Common myeloid progenitor, CD34-positive (primary cell): ENCODE measurements at regions of chr3 and their contacts with region 1.

Region 1: DNA sequence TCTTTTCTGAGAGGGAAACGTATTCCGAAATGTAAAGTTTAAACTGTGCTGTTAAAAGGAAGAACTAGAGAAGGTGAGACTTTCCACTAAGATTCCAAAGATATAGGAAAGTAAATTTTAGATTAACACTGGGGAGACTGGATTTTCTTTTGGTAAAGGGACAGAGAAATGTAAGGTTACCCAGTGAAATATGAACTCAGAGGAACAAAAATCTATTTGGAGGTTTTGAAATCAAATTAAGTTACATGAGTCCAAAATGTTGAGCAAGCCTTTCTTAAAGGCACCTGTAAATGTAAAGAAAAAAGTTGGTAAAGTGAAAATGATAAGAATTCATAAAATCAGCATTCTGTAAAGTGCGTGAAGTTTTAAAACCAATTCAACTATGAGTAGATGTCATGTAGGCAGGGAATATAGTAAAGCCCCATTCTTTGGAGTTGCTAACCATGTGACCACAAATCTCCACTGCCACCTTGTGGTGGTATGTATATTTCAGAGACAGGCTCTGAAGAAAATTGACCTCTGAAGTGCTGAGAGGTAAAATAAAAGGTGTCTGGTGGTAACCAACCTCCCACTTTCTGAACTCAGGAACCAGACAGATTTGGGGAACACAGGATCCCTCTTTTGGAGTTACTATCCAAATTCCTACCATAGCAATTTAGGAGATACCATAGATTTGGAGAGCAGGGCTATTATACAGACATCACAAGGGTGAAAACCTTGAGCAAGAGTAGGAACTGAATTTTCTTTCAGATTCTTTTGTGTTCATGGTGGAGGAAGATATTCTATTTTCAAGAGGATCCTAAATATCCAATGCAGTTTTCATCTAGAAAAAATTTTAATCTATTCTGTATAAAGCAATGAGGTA is 215.3 kb downstream of the ROBO2 start:
- DNase-seq: peak; percentile 34 to 62 (median 54)
- H3K4me3 ChIP-seq: no peak overlapping the region
- H3K27ac ChIP-seq: no peak overlapping the region
- H3K4me1 ChIP-seq: no peaks in the 10 kb centered on the region
- H3K27me3 ChIP-seq: peaks cover 0 to 5% (median 0%) of the 10 kb centered on the region in 5 experiments

Region 2: GRCh38 chr3:77038468-77038929 is 216.7 kb before region 1 on chr3:
- CTCF ChIA-PET with region 1: interaction called, 12 read pairs
- POLR2A ChIA-PET with region 1: no interaction called
- DNase-seq: peak; percentile 63 to 82 (median 77)
- H3K4me3 ChIP-seq: peak overlapping the region in 2 of 7 experiments; percentile 0 to 42
- H3K27ac ChIP-seq: no peak overlapping the region
- H3K4me1 ChIP-seq: peaks cover 0 to 15% (median 7%) of the 10 kb centered on the region in 4 experiments
- H3K27me3 ChIP-seq: peaks cover 13 to 66% (median 32%) of the 10 kb centered on the region in 5 experiments

Region 3: GRCh38 chr3:77236118-77236517 is 19.1 kb before region 1 on chr3:
- CTCF ChIA-PET with region 1: no interaction called
- POLR2A ChIA-PET with region 1: no interaction called
- DNase-seq: no peak
- H3K4me3 ChIP-seq: no peak overlapping the region
- H3K27ac ChIP-seq: no peak overlapping the region
- H3K4me1 ChIP-seq: no peaks in the 10 kb centered on the region
- H3K27me3 ChIP-seq: no peaks in the 10 kb centered on the region

Region 4: GRCh38 chr3:77772459-77772858 is 517.3 kb after region 1 on chr3:
- CTCF ChIA-PET with region 1: no interaction called
- POLR2A ChIA-PET with region 1: no interaction called
- DNase-seq: no peak
- H3K4me3 ChIP-seq: no peak overlapping the region
- H3K27ac ChIP-seq: no peak overlapping the region
- H3K4me1 ChIP-seq: no peaks in the 10 kb centered on the region
- H3K27me3 ChIP-seq: no peaks in the 10 kb centered on the region